ENCODE measurements at regions of chr1 and their contacts with region 1.

Region 1: GRCh38 chr1:64136752-64137411 is 66.5 kb upstream of the UBE2U start:
- DNase-seq: peak; percentile 74
- H3K4me3 ChIP-seq: no peak overlapping the region
- H3K27ac ChIP-seq: peak overlapping the region; percentile 25
- H3K4me1 ChIP-seq: peaks cover 33% of the 10 kb centered on the region
- H3K27me3 ChIP-seq: no peaks in the 10 kb centered on the region
- CTCF ChIP-seq: peak; percentile 90 to 92

Region 2: GRCh38 chr1:63624911-63625310 is 512.0 kb before region 1 on chr1:
- CTCF ChIA-PET with region 1: no interaction called
- dilution Hi-C with region 1: no loop called
- in situ Hi-C with region 1: loop called in 1 of 2 experiments (anchors 10 kb)
- intact Hi-C with region 1: no loop called
- DNase-seq: no peak
- H3K4me3 ChIP-seq: no peak overlapping the region
- H3K27ac ChIP-seq: no peak overlapping the region
- H3K4me1 ChIP-seq: peaks cover 30% of the 10 kb centered on the region
- H3K27me3 ChIP-seq: no peaks in the 10 kb centered on the region
- CTCF ChIP-seq: peak; percentile 12 to 31

Region 3: GRCh38 chr1:63773815-63774616 is 362.9 kb before region 1 on chr1 and contains the start of gene ROR1:
- CTCF ChIA-PET with region 1: interaction called, 5 read pairs
- dilution Hi-C with region 1: no loop called
- in situ Hi-C with region 1: loop called in 1 of 2 experiments (anchors 5 kb)
- intact Hi-C with region 1: loop called (anchors 1 kb)
- DNase-seq: peak; percentile 82
- H3K4me3 ChIP-seq: peak within 1 kb of the TSS; percentile 87 to 93 (median 90)
- H3K27ac ChIP-seq: peak within 1 kb of the TSS; percentile 48
- H3K4me1 ChIP-seq: peaks cover 29% of the 10 kb centered on the region
- H3K27me3 ChIP-seq: no peaks in the 10 kb centered on the region
- CTCF ChIP-seq: peak; percentile 23 to 84
- total RNA-seq, gene ROR1: 11.5 to 21.8 TPM

Region 4: DNA sequence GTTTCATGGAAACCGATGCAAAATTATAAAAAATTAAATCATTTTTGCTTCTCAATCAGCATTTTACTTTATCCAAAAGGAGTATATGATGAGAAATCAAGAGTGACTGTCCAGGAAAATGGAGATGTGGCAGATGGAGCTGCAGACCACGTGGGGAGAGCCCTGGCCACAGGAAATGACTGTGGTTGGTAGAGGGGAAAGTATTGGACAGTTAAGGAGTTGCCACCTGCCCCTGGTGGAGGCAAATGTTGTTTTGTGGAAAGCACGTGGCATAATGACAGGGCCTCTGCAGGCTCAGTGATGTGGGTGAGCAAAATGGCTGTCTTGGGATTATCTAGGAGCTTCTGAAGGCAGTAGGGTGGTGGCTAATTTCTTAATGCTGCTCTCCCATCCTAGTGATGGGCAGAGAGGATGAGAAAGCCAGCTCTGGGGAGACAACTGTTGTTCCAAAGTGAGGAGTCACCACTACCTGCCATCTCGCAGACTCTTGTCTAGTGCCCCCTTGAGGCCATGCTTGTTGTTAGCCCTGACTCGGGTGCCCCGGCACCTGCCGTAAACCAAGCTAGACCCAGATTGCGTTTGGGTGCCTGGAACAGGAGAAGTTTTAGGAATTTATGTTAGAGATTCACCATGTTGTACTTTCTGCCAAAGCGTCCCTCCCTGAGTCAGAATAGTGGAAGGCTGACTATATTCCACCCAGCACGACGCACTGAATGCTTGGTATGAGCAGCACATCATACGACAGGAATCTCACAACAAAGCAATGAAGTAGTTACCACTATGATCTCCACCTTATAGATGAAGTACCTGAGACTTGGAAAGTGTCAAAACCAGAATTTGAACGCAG is 219.1 kb before region 1 on chr1:
- CTCF ChIA-PET with region 1: no interaction called
- dilution Hi-C with region 1: no loop called
- in situ Hi-C with region 1: no loop called
- intact Hi-C with region 1: loop called (anchors 1 kb)
- DNase-seq: no peak
- H3K4me3 ChIP-seq: no peak overlapping the region
- H3K27ac ChIP-seq: no peak overlapping the region
- H3K4me1 ChIP-seq: peaks cover 35% of the 10 kb centered on the region
- H3K27me3 ChIP-seq: no peaks in the 10 kb centered on the region
- CTCF ChIP-seq: peak; percentile 31 to 33

Region 5: DNA sequence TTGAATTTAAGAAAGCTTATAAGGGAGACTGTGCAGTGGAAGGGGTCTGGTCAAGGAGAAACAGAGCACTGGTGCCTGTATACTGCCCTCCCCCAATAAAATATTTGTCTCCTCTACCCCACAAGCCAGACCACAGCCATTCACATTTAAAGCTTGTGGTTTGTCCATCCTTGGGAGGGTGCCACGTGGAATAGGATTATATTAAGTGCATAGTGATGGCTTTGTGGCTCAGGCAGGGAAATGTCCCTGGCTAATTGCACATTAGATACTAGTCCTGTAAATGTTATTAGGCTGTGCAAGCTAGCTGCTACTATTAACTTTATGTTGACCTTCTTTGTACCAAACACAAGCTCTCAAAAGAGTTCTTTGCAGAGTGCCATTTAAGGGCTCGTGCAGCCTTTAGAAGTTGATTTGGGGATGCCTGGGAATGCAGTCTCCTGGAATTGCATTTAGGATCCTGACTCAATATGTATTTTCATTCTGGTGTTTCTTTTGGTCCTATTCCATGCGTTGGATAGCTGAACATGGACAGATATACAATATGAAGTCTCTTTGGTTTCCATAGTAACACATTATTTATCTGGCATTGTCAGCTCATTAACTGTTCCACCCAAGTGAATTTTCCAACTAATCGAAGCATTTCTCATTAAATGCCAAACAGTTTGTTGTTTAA is 152.5 kb before region 1 on chr1:
- CTCF ChIA-PET with region 1: no interaction called
- dilution Hi-C with region 1: no loop called
- in situ Hi-C with region 1: no loop called
- intact Hi-C with region 1: loop called (anchors 1 kb)
- DNase-seq: peak; percentile 71
- H3K4me3 ChIP-seq: peak overlapping the region in 2 of 3 experiments; percentile 0 to 4
- H3K27ac ChIP-seq: peak overlapping the region; percentile 96
- H3K4me1 ChIP-seq: peaks cover 59% of the 10 kb centered on the region
- H3K27me3 ChIP-seq: no peaks in the 10 kb centered on the region
- CTCF ChIP-seq: no peak

Region 6: GRCh38 chr1:64051796-64052195 is 85.1 kb before region 1 on chr1:
- CTCF ChIA-PET with region 1: no interaction called
- dilution Hi-C with region 1: no loop called
- in situ Hi-C with region 1: no loop called
- intact Hi-C with region 1: no loop called
- DNase-seq: no peak
- H3K4me3 ChIP-seq: no peak overlapping the region
- H3K27ac ChIP-seq: no peak overlapping the region
- H3K4me1 ChIP-seq: peaks cover 4% of the 10 kb centered on the region
- H3K27me3 ChIP-seq: no peaks in the 10 kb centered on the region
- CTCF ChIP-seq: no peak

Region 7: DNA sequence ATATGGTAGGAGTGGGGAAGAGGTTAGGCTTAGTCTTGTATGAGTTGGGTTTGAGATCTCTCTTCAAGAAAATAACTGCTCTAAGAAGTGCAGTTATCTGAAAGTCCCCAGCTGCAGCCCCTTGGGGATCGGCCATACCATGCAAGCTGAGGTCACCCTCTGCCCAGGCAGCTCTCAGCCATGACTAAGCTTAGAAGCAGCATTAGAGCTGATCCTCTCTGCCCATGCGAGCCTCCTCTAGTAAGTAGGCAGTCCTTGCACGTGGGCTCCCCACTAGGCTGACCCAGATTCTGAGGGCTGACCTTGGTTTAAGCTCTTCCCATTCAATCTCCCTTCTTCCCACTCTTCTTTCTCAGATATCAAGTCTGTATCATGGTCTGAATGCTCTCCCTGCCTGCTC is 54.4 kb before region 1 on chr1:
- CTCF ChIA-PET with region 1: no interaction called
- dilution Hi-C with region 1: no loop called
- in situ Hi-C with region 1: no loop called
- intact Hi-C with region 1: loop called (anchors 5 kb)
- DNase-seq: peak; percentile 84
- H3K4me3 ChIP-seq: no peak overlapping the region
- H3K27ac ChIP-seq: peak overlapping the region; percentile 38
- H3K4me1 ChIP-seq: peaks cover 36% of the 10 kb centered on the region
- H3K27me3 ChIP-seq: no peaks in the 10 kb centered on the region
- CTCF ChIP-seq: no peak

Region 8: GRCh38 chr1:64236541-64236954 is 99.7 kb after region 1 on chr1:
- CTCF ChIA-PET with region 1: no interaction called
- dilution Hi-C with region 1: no loop called
- in situ Hi-C with region 1: no loop called
- intact Hi-C with region 1: no loop called
- DNase-seq: no peak
- H3K4me3 ChIP-seq: no peak overlapping the region
- H3K27ac ChIP-seq: no peak overlapping the region
- H3K4me1 ChIP-seq: no peaks in the 10 kb centered on the region
- H3K27me3 ChIP-seq: no peaks in the 10 kb centered on the region
- CTCF ChIP-seq: no peak

Region 9: GRCh38 chr1:64378826-64379225 is 241.9 kb after region 1 on chr1:
- CTCF ChIA-PET with region 1: no interaction called
- dilution Hi-C with region 1: no loop called
- in situ Hi-C with region 1: no loop called
- intact Hi-C with region 1: no loop called
- DNase-seq: no peak
- H3K4me3 ChIP-seq: no peak overlapping the region
- H3K27ac ChIP-seq: no peak overlapping the region
- H3K4me1 ChIP-seq: no peaks in the 10 kb centered on the region
- H3K27me3 ChIP-seq: no peaks in the 10 kb centered on the region
- CTCF ChIP-seq: peak in 1 of 2 donors; percentile 9

Measured in mammary epithelial cell (primary cell).